SK-MEL-5 (cell line): ENCODE measurements at regions of chr5 and their contacts with region 1.

Region 1: DNA sequence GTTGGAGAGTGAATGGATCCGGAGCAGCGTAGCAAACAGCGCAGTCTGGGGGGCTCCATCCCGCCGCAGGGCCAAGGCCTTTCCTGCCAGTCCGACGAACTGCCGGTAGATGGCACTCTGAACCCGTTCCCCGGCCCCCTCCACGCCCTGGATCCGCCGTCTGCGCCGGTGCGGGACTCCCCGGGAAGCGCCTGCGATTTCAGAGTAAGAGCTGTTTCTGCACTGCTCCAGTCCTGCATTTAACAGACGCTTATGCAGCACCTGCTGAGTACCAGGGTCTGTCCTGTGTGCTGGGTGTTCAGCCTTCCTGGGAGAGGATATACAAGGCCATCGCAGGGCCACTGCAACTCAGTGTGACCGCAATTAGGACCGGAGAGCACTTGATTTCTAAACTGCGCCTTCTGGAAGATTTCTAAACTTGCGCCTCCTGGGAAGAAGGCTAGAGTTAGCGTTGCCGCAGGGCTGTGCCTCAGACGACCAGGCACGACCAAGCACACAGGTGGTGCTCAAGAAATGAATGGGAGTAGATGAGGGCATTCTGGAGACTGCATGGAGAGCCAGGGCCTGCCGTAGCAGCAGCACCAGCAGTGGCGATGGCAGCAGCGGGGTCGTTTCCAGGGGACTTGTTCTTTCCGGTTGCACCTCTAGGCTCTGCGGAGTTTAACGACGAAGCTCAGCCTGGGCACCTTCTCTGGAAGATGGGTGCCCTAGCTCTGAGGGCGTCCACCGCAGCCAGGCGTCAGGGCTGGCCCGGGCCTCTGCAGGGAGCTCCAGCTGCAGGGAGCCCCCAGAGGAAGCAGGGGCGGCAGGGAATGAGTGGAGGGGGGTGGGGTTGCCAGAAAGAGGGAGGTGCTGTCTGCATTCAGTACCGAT is 14.3 kb upstream of the TIFAB start:
- DNase-seq: peak; percentile 68

Region 2: DNA sequence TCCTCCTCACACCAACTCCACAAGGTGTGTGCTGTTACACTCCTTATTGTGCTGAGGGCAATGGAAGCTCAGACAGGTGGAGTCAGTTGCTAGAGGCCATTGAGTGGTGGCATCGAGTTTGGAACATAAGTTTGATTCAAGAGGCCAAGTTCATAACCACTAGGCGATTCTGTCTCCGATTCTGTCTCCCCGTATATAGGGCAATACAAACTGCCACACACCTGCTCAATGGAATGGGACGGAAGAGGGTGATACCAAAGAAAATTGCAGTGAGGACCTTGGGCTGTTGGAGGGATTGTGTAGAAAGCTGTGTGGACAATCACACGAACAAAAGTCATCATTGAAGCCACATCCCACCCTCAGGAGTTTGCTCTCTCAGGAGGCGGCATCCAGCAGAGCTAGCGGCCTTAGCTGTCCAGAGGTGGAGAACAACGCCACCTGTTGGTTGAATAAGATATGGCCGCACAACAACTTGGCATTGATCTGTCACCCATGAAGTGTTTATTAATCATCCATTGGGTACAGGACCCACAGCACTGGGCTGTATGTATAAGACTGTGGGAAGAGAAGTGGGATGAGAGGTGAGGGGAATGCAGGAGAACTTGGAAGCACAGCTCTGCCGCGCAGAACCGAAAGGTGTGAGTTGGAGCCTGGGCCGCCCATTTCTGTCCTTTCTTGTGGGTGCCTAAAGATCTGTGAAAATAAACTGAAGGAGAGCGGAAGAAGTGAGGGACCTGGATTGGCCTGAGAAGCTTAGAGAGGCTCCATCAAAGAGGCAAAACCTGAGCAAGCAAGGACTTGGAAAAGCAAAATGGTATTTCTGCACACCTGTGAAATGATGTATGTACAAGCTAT is 85.4 kb after region 1 on chr5:
- in situ Hi-C with region 1: loop called (anchors 5 kb)
- DNase-seq: peak; percentile 79